Posterior cingulate gyrus (tissue), 11 donors: ENCODE measurements at regions of chr6 and their contacts with region 1.

Region 1: DNA sequence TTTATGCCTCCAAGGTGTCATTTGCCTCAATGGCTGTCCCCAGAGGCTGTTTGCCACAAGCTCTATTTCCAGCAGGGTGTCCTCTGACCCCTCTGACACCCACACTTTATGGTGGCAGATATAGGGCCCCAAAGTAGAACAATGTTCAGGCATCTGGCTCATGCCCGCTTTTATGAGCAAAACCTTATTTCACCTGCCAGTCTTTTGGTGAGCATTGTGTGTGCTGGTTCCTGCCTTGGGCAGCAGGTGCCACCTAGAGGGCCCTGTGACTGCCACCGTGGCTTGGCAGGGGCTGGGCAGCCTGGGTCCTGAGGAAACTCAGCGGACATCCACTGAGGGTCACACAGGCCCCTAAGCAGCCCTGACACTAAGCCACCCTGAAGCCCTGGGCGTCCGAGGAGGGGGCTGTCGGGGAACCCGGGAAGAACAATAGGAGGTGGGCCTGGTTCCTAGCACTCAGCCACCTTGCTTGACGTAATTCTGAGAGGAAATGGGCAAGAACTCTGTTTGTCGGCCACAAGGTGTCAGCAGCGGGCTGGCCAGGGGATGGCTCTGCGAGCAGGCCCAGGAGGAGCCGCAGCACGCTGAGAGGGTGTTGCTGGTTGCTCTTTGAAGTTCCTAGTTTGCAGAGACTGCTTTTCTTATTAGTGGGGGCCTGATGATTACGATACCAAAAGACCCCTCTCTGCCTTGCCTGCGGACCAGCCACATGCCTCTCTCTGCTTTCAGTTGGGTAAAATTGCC is 148.9 kb downstream of the SCML4 start:
- DNase-seq: peak; percentile 70 to 98 (median 87)

Region 2: DNA sequence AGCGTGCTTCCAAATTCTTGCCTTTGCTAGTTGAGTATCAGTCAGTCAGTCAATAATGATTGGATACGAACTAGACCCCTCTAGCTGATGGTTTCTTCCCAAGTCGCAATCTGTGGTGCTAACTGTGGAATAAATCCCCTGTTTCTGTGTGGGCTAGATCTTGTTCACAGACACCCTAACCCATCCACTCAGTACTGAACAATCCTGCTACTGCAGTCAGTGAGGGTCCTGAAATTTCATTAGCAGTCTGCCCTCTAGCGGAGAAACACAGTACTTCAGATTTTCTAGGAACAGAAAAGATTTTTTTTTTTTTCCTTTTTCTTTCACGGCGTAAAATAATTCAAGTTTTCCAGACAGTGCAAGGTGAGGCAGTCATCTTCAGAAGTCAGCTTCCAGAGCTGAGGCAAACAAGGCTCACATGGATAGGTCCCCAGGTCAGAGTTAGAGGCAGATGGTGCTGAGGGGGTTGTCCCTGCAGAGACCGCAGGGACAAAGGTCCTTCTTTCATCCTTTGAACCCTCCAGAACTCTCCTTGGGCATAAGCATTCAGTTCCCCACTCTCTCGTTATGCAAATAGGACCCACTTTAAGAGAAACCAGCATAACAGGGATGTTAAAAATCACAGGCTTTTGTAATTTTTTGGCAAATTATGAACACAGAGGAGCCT is 29.3 kb after region 1 on chr6:
- intact Hi-C with region 1: loop called (anchors 2 kb)
- DNase-seq: no peak

Region 3: GRCh38 chr6:107847844-107848802 is 173.0 kb after region 1 on chr6:
- intact Hi-C with region 1: loop called (anchors 1 kb)
- DNase-seq: peak; percentile 69 to 98 (median 88)

Region 4: DNA sequence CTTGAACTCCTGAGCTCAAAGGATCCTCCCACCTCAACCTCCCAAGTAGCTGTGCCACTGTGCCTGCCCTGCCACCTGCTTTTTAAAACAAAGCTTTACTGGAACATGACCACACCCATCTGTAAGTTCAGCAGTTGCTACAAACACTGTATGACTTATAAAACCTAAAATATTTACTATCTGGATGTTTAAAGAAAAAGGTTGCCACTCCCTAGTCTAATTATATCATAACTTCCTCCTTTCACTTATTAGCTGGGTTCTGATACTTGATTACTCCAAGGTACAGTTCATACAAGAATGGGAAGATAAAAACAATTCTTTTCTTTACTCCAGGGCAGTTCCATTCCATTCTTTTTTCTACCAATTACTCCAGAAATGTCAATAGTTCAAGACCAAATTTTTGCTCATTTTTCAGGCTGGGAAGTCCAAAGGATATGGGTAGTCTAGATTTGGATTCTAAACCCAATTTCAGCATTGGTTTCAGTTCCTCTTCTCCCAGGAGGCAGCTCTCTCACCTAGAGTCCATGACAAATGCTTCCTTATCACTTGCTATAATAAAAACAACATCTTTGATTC is 219.7 kb after region 1 on chr6:
- intact Hi-C with region 1: no loop called
- DNase-seq: no peak

Region 5: DNA sequence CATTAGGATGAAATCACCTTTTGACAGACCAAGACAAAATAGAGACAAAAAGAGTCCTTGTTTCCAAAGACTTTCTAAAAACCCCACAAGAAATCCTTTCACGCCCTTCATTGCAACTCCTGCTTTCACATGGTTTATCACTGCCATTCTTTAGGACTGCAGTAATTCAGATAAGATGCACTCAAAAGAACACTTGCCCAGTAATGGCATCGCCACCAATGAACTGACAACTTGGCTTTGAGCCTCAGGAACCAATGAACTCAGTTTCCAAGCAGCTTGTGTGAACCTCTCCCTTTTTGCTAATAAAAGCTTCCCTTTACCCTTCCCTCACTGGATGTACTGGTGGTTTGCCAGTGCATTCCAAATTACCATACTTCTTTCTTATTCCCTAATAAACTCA is 377.5 kb after region 1 on chr6:
- intact Hi-C with region 1: loop called (anchors 5 kb)
- DNase-seq: no peak